MCF 10A (cell line): ENCODE measurements at regions of chr6 and their contacts with region 1.

Region 1: GRCh38 chr6:142207265-142207877 is 60.3 kb downstream of the VTA1 start:
- DNase-seq: peak; percentile 67
- H3K4me3 Mint-ChIP-seq: no peak overlapping the region
- H3K27ac Mint-ChIP-seq: peak overlapping the region; percentile 31
- H3K4me1 Mint-ChIP-seq: no peaks in the 10 kb centered on the region
- H3K27me3 Mint-ChIP-seq: no peaks in the 10 kb centered on the region
- CTCF ChIP-seq: peak; percentile 72

Region 2: GRCh38 chr6:141988954-141989705 is 218.2 kb before region 1 on chr6:
- CTCF ChIA-PET with region 1: interaction called, 3 read pairs
- POLR2A ChIA-PET with region 1: no interaction called
- intact Hi-C with region 1: loop called (anchors 2 kb)
- DNase-seq: peak; percentile 84
- H3K4me3 Mint-ChIP-seq: no peak overlapping the region
- H3K27ac Mint-ChIP-seq: no peak overlapping the region
- H3K4me1 Mint-ChIP-seq: no peaks in the 10 kb centered on the region
- H3K27me3 Mint-ChIP-seq: peaks cover 11% of the 10 kb centered on the region
- CTCF ChIP-seq: peak; percentile 75

Region 3: GRCh38 chr6:142146828-142147662 is 60.3 kb before region 1 on chr6 and contains the starts of genes NMBR and VTA1:
- CTCF ChIA-PET with region 1: interaction called, 6 read pairs
- POLR2A ChIA-PET with region 1: no interaction called
- intact Hi-C with region 1: loop called (anchors 2 kb)
- DNase-seq: peak; percentile 98
- H3K4me3 Mint-ChIP-seq: peak within 1 kb of the TSS; percentile 97
- H3K27ac Mint-ChIP-seq: peak within 1 kb of the TSS; percentile 92
- H3K4me1 Mint-ChIP-seq: peaks cover 36% of the 10 kb centered on the region
- H3K27me3 Mint-ChIP-seq: no peaks in the 10 kb centered on the region
- CTCF ChIP-seq: peak; percentile 87
- total RNA-seq, gene NMBR: not detected in 2 replicates
- total RNA-seq, gene VTA1: 42.9 and 43.5 TPM in 2 replicates

Region 4: GRCh38 chr6:142155895-142156757 is 51.2 kb before region 1 on chr6:
- CTCF ChIA-PET with region 1: interaction called, 9 read pairs
- POLR2A ChIA-PET with region 1: no interaction called
- intact Hi-C with region 1: loop called (anchors 2 kb)
- DNase-seq: peak; percentile 33
- H3K4me3 Mint-ChIP-seq: peak overlapping the region; percentile 4
- H3K27ac Mint-ChIP-seq: peak overlapping the region; percentile 59
- H3K4me1 Mint-ChIP-seq: peaks cover 6% of the 10 kb centered on the region
- H3K27me3 Mint-ChIP-seq: no peaks in the 10 kb centered on the region
- CTCF ChIP-seq: peak; percentile 46

Region 5: DNA sequence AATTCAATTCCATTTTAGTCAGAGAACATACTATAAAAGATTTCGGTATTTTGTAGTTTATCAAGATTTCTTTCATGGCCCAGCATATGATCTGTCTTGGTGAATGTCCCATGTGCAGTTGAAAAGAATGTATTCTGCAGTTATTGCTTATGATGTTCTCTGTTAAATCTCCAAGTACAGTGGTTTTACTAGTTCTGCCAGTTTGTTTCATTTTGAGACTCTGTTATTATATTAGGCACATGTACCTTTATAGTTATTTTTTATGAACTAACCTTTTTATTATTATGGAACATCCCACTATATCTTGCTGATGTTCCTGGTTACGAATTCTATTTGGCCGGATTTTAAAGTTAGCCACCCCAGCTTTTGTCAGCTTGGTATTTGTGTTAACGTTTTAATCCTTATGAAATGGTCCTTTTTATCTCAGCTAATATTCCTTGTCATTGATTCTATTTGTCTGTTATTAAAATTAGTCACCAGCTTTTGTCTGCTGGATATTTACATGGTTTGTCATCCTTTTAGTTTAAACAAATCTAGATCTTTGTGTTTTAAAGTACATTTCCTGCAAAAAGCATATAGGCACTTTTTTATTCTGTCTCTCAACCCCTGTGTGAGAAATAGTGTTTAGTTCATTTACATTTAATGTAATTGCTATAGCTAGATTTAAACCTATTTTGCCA is 11.4 kb before region 1 on chr6:
- CTCF ChIA-PET with region 1: interaction called, 12 read pairs
- POLR2A ChIA-PET with region 1: no interaction called
- intact Hi-C with region 1: no loop called
- DNase-seq: no peak
- H3K4me3 Mint-ChIP-seq: no peak overlapping the region
- H3K27ac Mint-ChIP-seq: no peak overlapping the region
- H3K4me1 Mint-ChIP-seq: peaks cover 6% of the 10 kb centered on the region
- H3K27me3 Mint-ChIP-seq: no peaks in the 10 kb centered on the region
- CTCF ChIP-seq: no peak

Region 6: DNA sequence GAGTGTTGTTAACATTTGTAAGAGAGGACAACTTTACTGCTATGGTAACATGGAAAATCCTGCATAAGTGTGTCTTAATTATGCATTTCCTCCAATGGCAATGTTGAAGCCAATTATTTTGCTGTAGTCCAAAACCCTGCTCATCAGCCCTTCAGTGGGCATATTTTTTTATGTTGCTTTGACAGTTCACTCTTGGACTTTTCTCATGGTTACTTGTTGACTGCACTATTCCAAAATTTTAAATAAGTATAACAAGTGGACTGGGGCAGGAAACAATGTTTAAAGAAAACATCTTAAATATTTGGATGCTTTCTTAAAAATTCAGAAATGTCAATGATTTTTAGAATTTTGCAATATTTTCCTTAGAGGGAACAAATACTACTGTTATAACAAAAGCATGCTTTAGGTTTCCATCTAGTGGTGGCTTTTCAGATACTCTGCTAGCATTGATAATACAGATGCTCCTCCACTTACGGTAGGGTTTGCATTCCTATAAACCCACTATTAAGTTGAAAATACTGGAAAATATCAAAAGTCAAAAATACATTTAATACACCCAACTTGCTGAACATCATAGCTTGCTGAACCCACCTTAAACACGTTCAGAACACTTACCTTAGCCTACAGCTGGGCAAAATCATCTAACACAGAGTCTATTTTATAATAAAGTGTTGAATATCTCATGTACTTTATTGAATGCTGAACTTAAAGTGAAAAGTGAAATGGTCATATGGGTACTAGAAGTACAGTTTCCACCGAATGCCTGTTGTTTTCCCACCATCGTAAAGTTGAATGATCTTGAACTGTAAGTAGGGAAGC is 180.8 kb after region 1 on chr6:
- CTCF ChIA-PET with region 1: no interaction called
- POLR2A ChIA-PET with region 1: interaction called, 3 read pairs
- intact Hi-C with region 1: loop called (anchors 2 kb)
- DNase-seq: peak; percentile 64
- H3K4me3 Mint-ChIP-seq: no peak overlapping the region
- H3K27ac Mint-ChIP-seq: no peak overlapping the region
- H3K4me1 Mint-ChIP-seq: no peaks in the 10 kb centered on the region
- H3K27me3 Mint-ChIP-seq: no peaks in the 10 kb centered on the region
- CTCF ChIP-seq: peak; percentile 70